Heart left ventricle (tissue), 16 donors: ENCODE measurements at regions of chr19 and their contacts with region 1.

Region 1: DNA sequence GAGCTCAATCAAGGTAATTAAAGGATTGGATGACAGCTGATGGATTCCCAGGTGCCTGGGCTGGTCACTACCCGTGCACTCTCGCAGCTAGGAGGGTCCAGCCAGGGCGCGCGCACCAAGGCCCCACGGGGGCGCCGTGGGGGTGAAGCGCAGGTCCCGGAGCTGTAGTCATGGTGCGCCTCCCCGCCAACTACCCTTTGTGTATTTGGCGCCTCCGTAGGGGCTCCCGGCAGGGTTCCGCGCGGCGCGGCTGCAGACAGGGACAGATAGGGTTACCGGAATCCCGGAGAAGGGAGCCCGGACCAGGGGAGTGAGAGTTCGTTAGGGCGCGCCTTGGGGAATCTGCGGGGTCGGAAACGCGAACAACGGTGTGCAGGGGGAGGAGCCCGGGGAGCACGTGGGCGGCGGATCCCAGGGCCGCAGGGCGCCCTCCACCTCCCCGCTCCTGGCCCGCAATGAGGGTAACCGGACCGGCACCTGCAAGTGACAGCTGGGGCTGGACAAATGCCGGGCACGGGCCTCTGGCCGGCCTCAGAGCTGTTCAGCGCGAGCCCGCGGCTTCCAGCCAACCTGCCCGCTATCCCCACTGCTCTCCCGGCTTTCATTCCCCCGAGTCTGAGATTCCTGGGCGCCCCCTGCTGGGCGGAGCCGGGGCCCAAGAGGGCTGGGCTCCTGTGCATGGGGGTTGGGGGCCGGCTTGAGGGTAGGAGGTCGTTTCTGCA is 3.4 kb upstream of the PRAM1 start:
- DNase-seq: peak; percentile 79 to 90 (median 81)
- ATAC-seq: peak; percentile 73 to 89 (median 84)
- H3K4me3 ChIP-seq: peak overlapping the region; percentile 19 to 84 (median 60)
- H3K27ac ChIP-seq: peak overlapping the region in 6 of 12 donors; percentile 14 to 58 (median 30)
- H3K4me1 ChIP-seq: peaks cover 0 to 51% (median 10%) of the 10 kb centered on the region in 12 donors
- H3K27me3 ChIP-seq: no peaks in the 10 kb centered on the region
- CTCF ChIP-seq: peak; percentile 82 to 93 (median 88)
- POLR2A ChIP-seq: peak in 1 of 2 donors; percentile 17

Region 2: GRCh38 chr19:8444645-8445487 is 61.0 kb before region 1 on chr19 and contains the start of gene HNRNPM:
- intact Hi-C with region 1: loop called in 2 of 10 experiments (anchors 5 to 10 kb)
- DNase-seq: peak; percentile 100
- ATAC-seq: peak; percentile 94 to 98 (median 98)
- H3K4me3 ChIP-seq: peak within 1 kb of the TSS; percentile 71 to 100 (median 97)
- H3K27ac ChIP-seq: peak within 1 kb of the TSS; percentile 82 to 99 (median 96)
- H3K4me1 ChIP-seq: peaks cover 14 to 47% (median 40%) of the 10 kb centered on the region in 12 donors
- H3K27me3 ChIP-seq: no peaks in the 10 kb centered on the region
- CTCF ChIP-seq: no peak
- POLR2A ChIP-seq: peak; percentile 32 to 88
- total RNA-seq, gene HNRNPM: 46.7 to 111 (median 95.3) TPM

Region 3: DNA sequence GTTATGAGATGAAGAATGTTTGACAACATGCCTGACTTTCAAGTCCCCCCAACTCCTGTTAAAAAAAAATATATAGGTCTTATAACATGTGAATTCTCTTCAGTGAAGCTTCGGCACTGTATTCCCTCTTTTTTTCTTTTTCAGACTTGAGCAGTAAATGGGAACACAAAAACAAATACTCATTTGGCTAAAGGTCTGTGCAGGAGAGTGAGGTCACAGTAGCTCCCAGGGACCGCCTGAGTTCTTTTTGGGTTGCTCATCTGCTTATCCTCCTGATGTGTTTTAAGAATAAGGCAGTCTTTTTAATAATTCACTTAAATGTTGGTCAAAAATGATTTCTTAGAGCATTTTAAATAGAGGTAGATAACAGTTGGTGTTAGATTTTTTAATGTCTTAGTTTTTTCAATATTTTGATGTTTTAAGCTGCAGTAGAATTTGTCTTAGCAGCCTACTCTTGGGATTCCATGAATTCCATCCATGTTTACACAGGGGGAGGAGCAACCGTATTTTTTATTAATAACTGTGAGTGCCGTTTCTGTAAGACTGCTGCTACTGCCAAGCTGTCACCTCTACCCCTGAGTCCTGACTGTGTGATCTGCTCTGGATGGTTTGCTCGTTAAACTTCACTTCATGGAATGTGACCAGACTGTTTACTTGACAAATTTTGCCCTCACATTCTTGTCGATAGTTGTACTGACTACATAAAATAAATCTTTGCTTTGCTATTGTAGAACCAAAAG is 46.2 kb before region 1 on chr19:
- intact Hi-C with region 1: loop called in 1 of 10 experiments (anchors 5 kb)
- DNase-seq: no peak
- ATAC-seq: peak in 3 of 4 donors; percentile 51 to 66 (median 56)
- H3K4me3 ChIP-seq: peak overlapping the region in 3 of 12 donors; percentile 5 to 17 (median 12)
- H3K27ac ChIP-seq: peak overlapping the region in 10 of 12 donors; percentile 3 to 61 (median 44)
- H3K4me1 ChIP-seq: peaks cover 17 to 91% (median 70%) of the 10 kb centered on the region in 12 donors
- H3K27me3 ChIP-seq: no peaks in the 10 kb centered on the region
- CTCF ChIP-seq: no peak
- POLR2A ChIP-seq: no peak

Region 4: DNA sequence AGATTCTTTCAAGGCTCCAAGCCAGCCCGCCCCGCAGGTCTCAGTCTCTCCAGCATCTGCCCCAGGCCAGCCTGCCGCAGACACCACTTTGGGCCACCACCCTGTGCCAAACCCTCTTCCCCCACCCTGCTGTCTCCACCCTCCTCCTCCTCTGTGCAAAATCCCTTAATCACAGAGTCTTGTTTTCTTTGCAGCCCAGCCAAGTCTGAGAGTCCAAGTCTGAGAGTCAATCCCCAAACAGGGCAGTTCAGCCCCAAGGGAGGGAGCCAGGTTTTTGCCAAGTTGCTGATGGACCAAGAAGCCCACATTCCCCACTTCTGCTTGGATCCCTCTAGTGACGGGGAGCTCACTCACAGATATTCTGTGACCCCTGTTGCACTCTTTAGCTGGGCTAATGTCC is 101.5 kb after region 1 on chr19:
- intact Hi-C with region 1: no loop called
- DNase-seq: peak; percentile 46 to 74 (median 70)
- ATAC-seq: peak in 2 of 4 donors; percentile 40 to 57
- H3K4me3 ChIP-seq: no peak overlapping the region
- H3K27ac ChIP-seq: no peak overlapping the region
- H3K4me1 ChIP-seq: peaks cover 0 to 31% (median 13%) of the 10 kb centered on the region in 12 donors
- H3K27me3 ChIP-seq: peaks cover 0 to 6% (median 0%) of the 10 kb centered on the region in 9 donors
- CTCF ChIP-seq: no peak
- POLR2A ChIP-seq: no peak